ENCODE measurements at regions of chr3 and their contacts with region 1.

Region 1: GRCh38 chr3:126134219-126134975 is 46.0 kb downstream of the ALDH1L1 start:
- DNase-seq: peak; percentile 87
- H3K4me3 ChIP-seq: no peak overlapping the region; a peak in 1 of 4 replicates
- H3K27ac ChIP-seq: no peak overlapping the region
- H3K4me1 ChIP-seq: peaks cover 0 to 7% of the 10 kb centered on the region in 2 experiments; a peak in 1 of 4 replicates
- H3K27me3 ChIP-seq: no peaks in the 10 kb centered on the region
- CTCF ChIP-seq: peak; percentile 75
- EP300 ChIP-seq: no peak
- RAD21 ChIP-seq: peak; percentile 92

Region 2: GRCh38 chr3:125694761-125695294 is 439.6 kb before region 1 on chr3:
- CTCF ChIA-PET with region 1: no interaction called
- POLR2A ChIA-PET with region 1: no interaction called
- DNase-seq: no peak
- H3K4me3 ChIP-seq: no peak overlapping the region
- H3K27ac ChIP-seq: no peak overlapping the region
- H3K4me1 ChIP-seq: no peaks in the 10 kb centered on the region
- H3K27me3 ChIP-seq: no peaks in the 10 kb centered on the region
- CTCF ChIP-seq: no peak
- EP300 ChIP-seq: no peak
- RAD21 ChIP-seq: no peak

Region 3: DNA sequence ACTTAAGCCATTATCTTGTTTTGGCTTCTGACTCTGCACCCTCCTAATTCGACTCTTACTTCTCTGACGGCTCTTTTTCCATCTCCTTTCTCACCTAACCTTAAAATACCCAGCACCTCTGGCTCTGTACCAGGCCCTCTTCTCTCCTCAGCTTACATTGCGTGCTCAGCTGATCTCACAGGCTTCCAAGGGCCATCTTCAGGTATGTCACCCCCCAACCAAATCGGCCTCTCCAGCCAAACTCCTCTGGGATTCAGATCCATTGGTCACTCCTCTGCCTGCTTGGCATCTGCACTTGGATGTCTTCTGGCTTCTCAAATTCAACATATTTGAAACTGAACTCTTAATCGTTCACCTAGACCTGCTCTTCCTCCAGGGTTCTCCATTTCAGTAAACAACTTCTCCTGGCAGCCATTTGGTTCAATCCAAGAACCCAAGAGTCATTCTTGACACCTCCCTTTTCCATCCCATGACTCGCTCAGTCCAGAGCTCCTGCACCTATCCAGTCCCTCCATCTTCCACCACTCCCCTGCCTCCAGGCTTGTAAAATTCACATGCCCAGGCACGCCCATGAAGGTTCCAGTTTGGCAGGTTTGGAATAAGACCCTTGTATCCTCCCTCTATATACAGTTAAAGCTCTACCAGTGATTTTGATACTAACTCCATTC is 15.3 kb before region 1 on chr3:
- CTCF ChIA-PET with region 1: interaction called, 60 read pairs
- POLR2A ChIA-PET with region 1: no interaction called
- DNase-seq: no peak
- H3K4me3 ChIP-seq: no peak overlapping the region
- H3K27ac ChIP-seq: no peak overlapping the region
- H3K4me1 ChIP-seq: peaks cover 0 to 2% of the 10 kb centered on the region in 2 experiments; a peak in 1 of 4 replicates
- H3K27me3 ChIP-seq: no peaks in the 10 kb centered on the region; the same call in 1 of the 2 replicates
- CTCF ChIP-seq: no peak
- EP300 ChIP-seq: no peak
- RAD21 ChIP-seq: no peak

Region 4: GRCh38 chr3:126158016-126158911 is 23.9 kb after region 1 on chr3:
- CTCF ChIA-PET with region 1: interaction called, 72 read pairs
- POLR2A ChIA-PET with region 1: no interaction called
- DNase-seq: no peak
- H3K4me3 ChIP-seq: no peak overlapping the region
- H3K27ac ChIP-seq: no peak overlapping the region
- H3K4me1 ChIP-seq: peaks cover 4 to 7% of the 10 kb centered on the region in 2 experiments; a peak in 1 of 4 replicates
- H3K27me3 ChIP-seq: no peaks in the 10 kb centered on the region
- CTCF ChIP-seq: no peak
- EP300 ChIP-seq: no peak
- RAD21 ChIP-seq: no peak

Region 5: DNA sequence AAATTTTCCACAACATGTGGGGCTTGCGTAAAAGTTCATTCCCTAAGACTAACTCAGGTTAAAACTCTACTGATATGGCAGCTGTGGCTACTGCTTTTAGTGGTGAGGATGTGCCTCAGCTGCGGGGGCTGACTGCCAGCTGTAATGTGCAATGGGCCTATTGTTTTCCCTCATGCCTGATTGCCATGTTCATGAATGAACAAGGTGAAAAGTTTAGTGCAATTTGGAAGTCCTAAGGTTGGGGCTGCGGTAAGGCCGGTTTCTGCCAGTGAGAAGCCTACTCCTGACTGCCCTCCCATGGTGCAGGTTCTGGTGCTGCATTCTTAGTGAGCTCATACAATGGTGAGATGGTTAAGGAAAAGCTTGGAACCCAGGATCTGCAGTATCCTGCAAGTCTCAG is 56.8 kb after region 1 on chr3:
- CTCF ChIA-PET with region 1: interaction called, 122 read pairs
- POLR2A ChIA-PET with region 1: no interaction called
- DNase-seq: no peak
- H3K4me3 ChIP-seq: no peak overlapping the region
- H3K27ac ChIP-seq: no peak overlapping the region
- H3K4me1 ChIP-seq: no peaks in the 10 kb centered on the region
- H3K27me3 ChIP-seq: no peaks in the 10 kb centered on the region
- CTCF ChIP-seq: no peak
- EP300 ChIP-seq: no peak
- RAD21 ChIP-seq: no peak

Region 6: GRCh38 chr3:126245811-126246727 is 111.7 kb after region 1 on chr3:
- CTCF ChIA-PET with region 1: interaction called, 12 read pairs
- POLR2A ChIA-PET with region 1: no interaction called
- DNase-seq: peak; percentile 59
- H3K4me3 ChIP-seq: no peak overlapping the region
- H3K27ac ChIP-seq: no peak overlapping the region
- H3K4me1 ChIP-seq: no peaks in the 10 kb centered on the region; a peak in 1 of 4 replicates
- H3K27me3 ChIP-seq: no peaks in the 10 kb centered on the region; the same call in 1 of the 2 replicates
- CTCF ChIP-seq: peak; percentile 57
- EP300 ChIP-seq: no peak
- RAD21 ChIP-seq: peak; percentile 60

Region 7: DNA sequence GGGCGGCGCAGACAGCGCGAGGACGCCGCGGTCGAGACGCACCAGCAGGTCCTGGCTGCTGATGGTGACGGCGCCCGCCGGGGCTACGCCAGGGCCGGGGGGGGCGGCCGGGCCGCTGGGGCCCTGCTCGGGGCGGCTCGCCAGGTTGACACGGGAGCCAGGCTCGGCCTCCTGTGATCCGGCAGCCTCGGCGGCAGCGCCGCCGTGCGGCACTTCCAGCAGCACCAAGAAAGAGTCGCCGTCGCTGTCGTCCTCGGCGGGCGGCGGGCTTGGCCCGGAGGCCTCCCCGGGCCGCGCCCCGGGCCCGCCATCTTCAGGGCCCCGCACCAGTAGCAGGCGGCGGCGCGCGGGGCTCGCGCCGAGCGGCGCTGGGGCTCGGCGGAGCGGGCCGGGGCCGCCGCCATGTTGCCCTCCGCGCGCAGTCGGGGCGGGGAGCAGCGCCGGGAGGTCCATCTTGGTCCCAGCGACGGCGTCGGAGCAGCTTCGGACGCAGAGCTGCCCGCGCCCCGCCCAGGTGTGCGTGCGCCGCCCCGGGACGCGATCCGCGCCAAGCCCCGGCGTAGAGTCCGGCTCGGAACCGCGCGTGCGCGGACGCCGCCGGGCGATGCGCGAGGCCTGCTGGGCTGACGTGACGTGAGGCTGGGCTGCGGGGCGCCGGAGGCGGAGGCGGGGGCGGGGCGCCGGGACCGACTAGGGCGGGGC is 341.2 kb after region 1 on chr3 and contains the start of gene ZXDC:
- CTCF ChIA-PET with region 1: interaction called, 15 read pairs
- POLR2A ChIA-PET with region 1: no interaction called
- DNase-seq: peak; percentile 100
- H3K4me3 ChIP-seq: peak within 1 kb of the TSS; percentile 84 to 88
- H3K27ac ChIP-seq: peak within 1 kb of the TSS; percentile 38 to 91; a peak in 3 of 4 replicates
- H3K4me1 ChIP-seq: peaks cover 20 to 41% of the 10 kb centered on the region in 2 experiments
- H3K27me3 ChIP-seq: no peaks in the 10 kb centered on the region
- CTCF ChIP-seq: peak; percentile 21; the same call in 1 of the 2 replicates
- EP300 ChIP-seq: no peak
- RAD21 ChIP-seq: peak; percentile 51
- polyA plus RNA-seq, gene ZXDC: 8.5 and 9.1 TPM in 2 replicates

Measured in SK-N-SH (cell line).